ENCODE measurements at regions of chr11 and their contacts with region 1.

Region 1: GRCh38 chr11:124673333-124674167 is at the starts of genes SIAE and SPA17:
- DNase-seq: peak; percentile 74
- ATAC-seq: peak; percentile 95
- H3K4me3 ChIP-seq: peak within 1 kb of the TSS; percentile 96
- H3K27ac ChIP-seq: peak within 1 kb of the TSS; percentile 65
- H3K4me1 ChIP-seq: peaks cover 7% of the 10 kb centered on the region
- H3K27me3 ChIP-seq: no peaks in the 10 kb centered on the region
- CTCF ChIP-seq: no peak
- EP300 ChIP-seq: peak in 1 of 2 experiments; percentile 67; a peak in 1 of 4 replicates
- POLR2A ChIP-seq: peak; percentile 73
- RAD21 ChIP-seq: no peak
- polyA plus RNA-seq, gene SIAE: 0.93 to 0.97 TPM
- polyA plus RNA-seq, gene SPA17: 6.1 to 7.3 TPM

Region 2: GRCh38 chr11:124656774-124657630 is 16.5 kb before region 1 on chr11:
- CTCF ChIA-PET with region 1: interaction called, 10 read pairs
- POLR2A ChIA-PET with region 1: no interaction called
- RAD21 ChIA-PET with region 1: no interaction called
- SMC1A ChIA-PET with region 1: interaction called, 6 read pairs
- in situ Hi-C with region 1: no loop called
- intact Hi-C with region 1: no loop called
- DNase-seq: no peak
- ATAC-seq: no peak
- H3K4me3 ChIP-seq: no peak overlapping the region
- H3K27ac ChIP-seq: no peak overlapping the region
- H3K4me1 ChIP-seq: no peaks in the 10 kb centered on the region
- H3K27me3 ChIP-seq: no peaks in the 10 kb centered on the region
- CTCF ChIP-seq: no peak
- EP300 ChIP-seq: no peak
- POLR2A ChIP-seq: no peak
- RAD21 ChIP-seq: no peak

Region 3: GRCh38 chr11:124724979-124725718 is 51.6 kb after region 1 on chr11:
- CTCF ChIA-PET with region 1: interaction called, 15 read pairs
- POLR2A ChIA-PET with region 1: interaction called, 4 read pairs
- RAD21 ChIA-PET with region 1: interaction called, 9 read pairs
- SMC1A ChIA-PET with region 1: interaction called, 16 read pairs
- in situ Hi-C with region 1: no loop called
- intact Hi-C with region 1: no loop called
- DNase-seq: peak; percentile 41
- ATAC-seq: peak; percentile 95
- H3K4me3 ChIP-seq: no peak overlapping the region
- H3K27ac ChIP-seq: no peak overlapping the region
- H3K4me1 ChIP-seq: peaks cover 7% of the 10 kb centered on the region
- H3K27me3 ChIP-seq: no peaks in the 10 kb centered on the region; a peak in 2 of 4 replicates
- CTCF ChIP-seq: no peak
- EP300 ChIP-seq: no peak
- POLR2A ChIP-seq: no peak
- RAD21 ChIP-seq: no peak

Region 4: DNA sequence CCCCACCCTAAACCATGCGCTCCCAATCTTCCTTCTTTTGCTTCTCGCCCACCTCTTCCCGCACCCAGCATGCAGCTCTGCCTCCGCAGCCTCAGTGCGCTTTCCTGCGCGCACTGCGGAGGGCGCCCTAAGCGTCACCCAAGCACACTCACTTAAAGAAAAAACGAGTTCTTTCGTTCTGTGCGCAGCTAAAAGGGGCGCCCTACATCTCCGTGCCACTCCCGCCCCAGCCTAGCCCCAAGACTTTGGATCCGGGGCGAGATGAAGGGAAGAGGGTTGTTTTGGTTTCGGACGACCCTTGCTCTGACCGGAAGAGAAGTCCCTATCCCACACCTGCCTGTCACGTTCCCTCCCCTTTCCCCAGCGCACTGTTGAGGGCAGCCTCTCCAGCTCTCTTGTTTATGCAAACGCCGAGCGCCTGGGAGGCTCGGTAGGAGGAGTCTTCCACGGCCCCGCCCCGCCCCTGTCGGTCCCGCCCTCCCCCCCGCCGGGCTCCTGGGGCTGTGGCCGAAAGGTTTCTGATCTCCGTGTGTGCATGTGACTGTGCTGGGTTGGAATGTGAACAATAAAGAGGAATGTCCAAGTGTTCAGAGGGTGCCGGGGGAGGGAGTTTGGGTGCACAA is 73.2 kb after region 1 on chr11:
- CTCF ChIA-PET with region 1: interaction called, 109 read pairs
- POLR2A ChIA-PET with region 1: interaction called, 3 read pairs
- RAD21 ChIA-PET with region 1: interaction called, 23 read pairs
- SMC1A ChIA-PET with region 1: interaction called, 32 read pairs
- in situ Hi-C with region 1: no loop called
- intact Hi-C with region 1: no loop called
- DNase-seq: peak; percentile 53
- ATAC-seq: peak; percentile 94
- H3K4me3 ChIP-seq: peak overlapping the region; percentile 88
- H3K27ac ChIP-seq: peak overlapping the region; percentile 53; the same call in 1 of the 2 replicates
- H3K4me1 ChIP-seq: peaks cover 4% of the 10 kb centered on the region; the same call in 1 of the 2 replicates
- H3K27me3 ChIP-seq: no peaks in the 10 kb centered on the region
- CTCF ChIP-seq: peak; percentile 66 to 79 (median 78)
- EP300 ChIP-seq: no peak
- POLR2A ChIP-seq: peak; percentile 70
- RAD21 ChIP-seq: peak; percentile 47

Region 5: GRCh38 chr11:124769801-124770639 is 96.5 kb after region 1 on chr11:
- CTCF ChIA-PET with region 1: interaction called, 190 read pairs
- POLR2A ChIA-PET with region 1: no interaction called
- RAD21 ChIA-PET with region 1: interaction called, 67 read pairs
- SMC1A ChIA-PET with region 1: interaction called, 93 read pairs
- in situ Hi-C with region 1: no loop called
- intact Hi-C with region 1: no loop called
- DNase-seq: no peak
- ATAC-seq: no peak
- H3K4me3 ChIP-seq: no peak overlapping the region
- H3K27ac ChIP-seq: no peak overlapping the region
- H3K4me1 ChIP-seq: no peaks in the 10 kb centered on the region
- H3K27me3 ChIP-seq: no peaks in the 10 kb centered on the region
- CTCF ChIP-seq: no peak
- EP300 ChIP-seq: no peak
- POLR2A ChIP-seq: no peak
- RAD21 ChIP-seq: no peak

Region 6: GRCh38 chr11:124793466-124794278 is 120.1 kb after region 1 on chr11:
- CTCF ChIA-PET with region 1: interaction called, 128 read pairs
- POLR2A ChIA-PET with region 1: interaction called, 5 read pairs
- RAD21 ChIA-PET with region 1: interaction called, 56 read pairs
- SMC1A ChIA-PET with region 1: interaction called, 83 read pairs
- in situ Hi-C with region 1: no loop called
- intact Hi-C with region 1: loop called (anchors 1 kb)
- DNase-seq: no peak
- ATAC-seq: peak; percentile 80
- H3K4me3 ChIP-seq: no peak overlapping the region
- H3K27ac ChIP-seq: no peak overlapping the region
- H3K4me1 ChIP-seq: peaks cover 16% of the 10 kb centered on the region
- H3K27me3 ChIP-seq: no peaks in the 10 kb centered on the region
- CTCF ChIP-seq: peak; percentile 65 to 72 (median 70)
- EP300 ChIP-seq: no peak
- POLR2A ChIP-seq: no peak
- RAD21 ChIP-seq: peak; percentile 68

Region 7: DNA sequence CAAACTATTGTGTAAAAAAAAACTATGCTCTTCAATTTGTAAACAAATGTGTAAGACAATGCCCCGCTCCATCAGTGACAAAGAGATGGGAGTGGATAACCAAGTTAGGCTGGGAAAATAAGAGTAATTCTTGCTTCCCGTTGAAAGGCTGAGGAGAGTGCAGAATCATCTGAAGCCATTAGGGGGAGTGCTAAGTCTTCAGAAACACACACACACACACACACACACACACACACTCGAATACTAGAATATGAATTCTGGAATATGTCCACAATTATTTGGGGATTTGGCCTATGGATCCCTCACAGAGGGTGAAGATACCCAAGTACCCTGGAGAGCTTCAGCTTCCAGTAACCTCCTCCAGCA is 163.9 kb after region 1 on chr11:
- CTCF ChIA-PET with region 1: interaction called, 102 read pairs
- POLR2A ChIA-PET with region 1: interaction called, 3 read pairs
- RAD21 ChIA-PET with region 1: interaction called, 33 read pairs
- SMC1A ChIA-PET with region 1: interaction called, 27 read pairs
- in situ Hi-C with region 1: loop called (anchors 5 kb)
- intact Hi-C with region 1: loop called (anchors 1 kb)
- DNase-seq: peak; percentile 2
- ATAC-seq: peak; percentile 67
- H3K4me3 ChIP-seq: no peak overlapping the region
- H3K27ac ChIP-seq: no peak overlapping the region
- H3K4me1 ChIP-seq: no peaks in the 10 kb centered on the region
- H3K27me3 ChIP-seq: peaks cover 16 to 17% of the 10 kb centered on the region in 2 experiments
- CTCF ChIP-seq: peak; percentile 41 to 60 (median 54)
- EP300 ChIP-seq: no peak
- POLR2A ChIP-seq: no peak
- RAD21 ChIP-seq: peak; percentile 46